ENCODE measurements at regions of chr1 and their contacts with region 1.

Region 1: GRCh38 chr1:206797534-206798383 is 25.5 kb upstream of the IL10 start:
- DNase-seq: peak in 2 of 5 donors; percentile 25 to 45
- H3K4me3 ChIP-seq: no peak overlapping the region
- H3K4me3 Mint-ChIP-seq: peak overlapping the region in 1 of 8 donors; percentile 48
- H3K27ac ChIP-seq: no peak overlapping the region
- H3K27ac Mint-ChIP-seq: peak overlapping the region in 2 of 7 donors; percentile 38 to 76
- H3K4me1 ChIP-seq: peaks cover 50% of the 10 kb centered on the region
- H3K4me1 Mint-ChIP-seq: peaks cover 37 to 79% (median 54%) of the 10 kb centered on the region in 4 donors
- H3K27me3 ChIP-seq: no peaks in the 10 kb centered on the region
- H3K27me3 Mint-ChIP-seq: peaks cover 0 to 2% of the 10 kb centered on the region in 2 donors

Region 2: GRCh38 chr1:206766251-206766856 is 31.4 kb before region 1 on chr1:
- CTCF ChIA-PET with region 1: interaction called, 20 read pairs
- POLR2A ChIA-PET with region 1: interaction called, 141 read pairs
- intact Hi-C with region 1: no loop called
- DNase-seq: peak; percentile 67 to 85 (median 74)
- H3K4me3 ChIP-seq: no peak overlapping the region
- H3K4me3 Mint-ChIP-seq: peak overlapping the region; percentile 61 to 82 (median 76)
- H3K27ac ChIP-seq: no peak overlapping the region
- H3K27ac Mint-ChIP-seq: peak overlapping the region; percentile 82 to 95 (median 91)
- H3K4me1 ChIP-seq: peaks cover 67% of the 10 kb centered on the region
- H3K4me1 Mint-ChIP-seq: peaks cover 48 to 72% (median 61%) of the 10 kb centered on the region in 4 donors
- H3K27me3 ChIP-seq: no peaks in the 10 kb centered on the region
- H3K27me3 Mint-ChIP-seq: no peaks in the 10 kb centered on the region

Region 3: DNA sequence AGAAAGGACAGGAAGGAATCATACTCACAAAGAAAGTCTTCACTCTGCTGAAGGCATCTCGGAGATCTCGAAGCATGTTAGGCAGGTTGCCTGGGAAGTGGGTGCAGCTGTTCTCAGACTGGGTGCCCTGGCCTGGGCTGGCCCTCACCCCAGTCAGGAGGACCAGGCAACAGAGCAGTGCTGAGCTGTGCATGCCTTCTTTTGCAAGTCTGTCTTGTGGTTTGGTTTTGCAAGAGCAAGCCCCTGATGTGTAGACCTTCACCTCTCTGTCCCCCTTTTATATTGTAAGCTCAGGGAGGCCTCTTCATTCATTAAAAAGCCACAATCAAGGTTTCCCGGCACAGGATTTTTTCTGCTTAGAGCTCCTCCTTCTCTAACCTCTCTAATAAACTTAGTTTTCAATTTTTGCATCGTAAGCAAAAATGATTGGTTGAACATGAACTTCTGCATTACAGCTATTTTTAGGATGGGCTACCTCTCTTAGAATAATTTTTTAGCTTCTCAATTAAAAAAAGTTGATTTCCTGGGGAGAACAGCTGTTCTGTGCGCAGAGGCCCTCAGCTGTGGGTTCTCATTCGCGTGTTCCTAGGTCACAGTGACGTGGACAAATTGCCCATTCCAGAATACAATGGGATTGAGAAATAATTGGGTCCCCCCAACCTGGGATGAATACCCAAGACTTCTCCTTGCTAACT is 25.4 kb before region 1 on chr1 and contains the start of gene IL10:
- CTCF ChIA-PET with region 1: interaction called, 20 read pairs
- POLR2A ChIA-PET with region 1: interaction called, 141 read pairs
- intact Hi-C with region 1: no loop called
- DNase-seq: no peak
- H3K4me3 ChIP-seq: no peak within 1 kb of the TSS
- H3K4me3 Mint-ChIP-seq: peak within 1 kb of the TSS in 5 of 8 donors; percentile 11 to 55 (median 35)
- H3K27ac ChIP-seq: no peak within 1 kb of the TSS
- H3K27ac Mint-ChIP-seq: peak within 1 kb of the TSS in 6 of 7 donors; percentile 15 to 76 (median 36)
- H3K4me1 ChIP-seq: peaks cover 53% of the 10 kb centered on the region
- H3K4me1 Mint-ChIP-seq: peaks cover 43 to 68% (median 56%) of the 10 kb centered on the region in 4 donors
- H3K27me3 ChIP-seq: no peaks in the 10 kb centered on the region
- H3K27me3 Mint-ChIP-seq: no peaks in the 10 kb centered on the region
- total RNA-seq, gene IL10: 0.28 to 0.32 TPM

Region 4: DNA sequence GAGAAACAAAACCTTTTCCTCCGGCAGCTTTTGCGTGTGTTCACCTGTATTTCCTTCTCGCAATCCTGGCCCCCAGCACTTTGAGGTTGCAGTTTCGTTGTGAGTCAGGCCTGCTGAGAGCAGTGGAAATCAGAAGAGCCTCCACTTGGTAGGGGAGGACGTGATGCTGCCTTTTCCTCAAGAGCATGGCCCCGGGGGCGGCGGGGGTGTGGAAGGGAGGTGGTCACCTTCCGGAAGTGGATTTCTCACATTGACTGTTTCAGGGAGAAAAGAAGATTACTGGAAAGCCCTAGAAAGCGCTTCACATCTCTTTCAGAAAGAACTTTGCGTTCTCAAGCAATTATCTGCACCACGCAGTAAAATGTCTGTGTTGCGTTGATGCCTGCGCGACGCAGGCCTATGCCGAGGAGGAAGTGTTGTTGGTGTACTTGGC is 13.3 kb before region 1 on chr1:
- CTCF ChIA-PET with region 1: interaction called, 25 read pairs
- POLR2A ChIA-PET with region 1: interaction called, 46 read pairs
- intact Hi-C with region 1: no loop called
- DNase-seq: peak; percentile 60 to 83 (median 63)
- H3K4me3 ChIP-seq: peak overlapping the region in 1 of 2 donors; percentile 16
- H3K4me3 Mint-ChIP-seq: peak overlapping the region; percentile 55 to 84 (median 70)
- H3K27ac ChIP-seq: peak overlapping the region; percentile 46
- H3K27ac Mint-ChIP-seq: peak overlapping the region; percentile 83 to 96 (median 93)
- H3K4me1 ChIP-seq: peaks cover 37% of the 10 kb centered on the region
- H3K4me1 Mint-ChIP-seq: peaks cover 37 to 60% (median 49%) of the 10 kb centered on the region in 4 donors
- H3K27me3 ChIP-seq: no peaks in the 10 kb centered on the region
- H3K27me3 Mint-ChIP-seq: no peaks in the 10 kb centered on the region

Region 5: GRCh38 chr1:206808615-206809014 is 10.9 kb after region 1 on chr1:
- CTCF ChIA-PET with region 1: interaction called, 11 read pairs
- POLR2A ChIA-PET with region 1: interaction called, 12 read pairs
- intact Hi-C with region 1: no loop called
- DNase-seq: peak; percentile 61 to 68 (median 63)
- H3K4me3 ChIP-seq: no peak overlapping the region
- H3K4me3 Mint-ChIP-seq: no peak overlapping the region
- H3K27ac ChIP-seq: no peak overlapping the region
- H3K27ac Mint-ChIP-seq: peak overlapping the region in 6 of 7 donors; percentile 20 to 90 (median 83)
- H3K4me1 ChIP-seq: peaks cover 35% of the 10 kb centered on the region
- H3K4me1 Mint-ChIP-seq: peaks cover 24 to 56% (median 43%) of the 10 kb centered on the region in 4 donors
- H3K27me3 ChIP-seq: no peaks in the 10 kb centered on the region
- H3K27me3 Mint-ChIP-seq: no peaks in the 10 kb centered on the region

Measured in CD4-positive, alpha-beta memory T cell (primary cell).